Prostate gland (tissue), 2 donors: ENCODE measurements at regions of chr10 and their contacts with region 1.

Region 1: DNA sequence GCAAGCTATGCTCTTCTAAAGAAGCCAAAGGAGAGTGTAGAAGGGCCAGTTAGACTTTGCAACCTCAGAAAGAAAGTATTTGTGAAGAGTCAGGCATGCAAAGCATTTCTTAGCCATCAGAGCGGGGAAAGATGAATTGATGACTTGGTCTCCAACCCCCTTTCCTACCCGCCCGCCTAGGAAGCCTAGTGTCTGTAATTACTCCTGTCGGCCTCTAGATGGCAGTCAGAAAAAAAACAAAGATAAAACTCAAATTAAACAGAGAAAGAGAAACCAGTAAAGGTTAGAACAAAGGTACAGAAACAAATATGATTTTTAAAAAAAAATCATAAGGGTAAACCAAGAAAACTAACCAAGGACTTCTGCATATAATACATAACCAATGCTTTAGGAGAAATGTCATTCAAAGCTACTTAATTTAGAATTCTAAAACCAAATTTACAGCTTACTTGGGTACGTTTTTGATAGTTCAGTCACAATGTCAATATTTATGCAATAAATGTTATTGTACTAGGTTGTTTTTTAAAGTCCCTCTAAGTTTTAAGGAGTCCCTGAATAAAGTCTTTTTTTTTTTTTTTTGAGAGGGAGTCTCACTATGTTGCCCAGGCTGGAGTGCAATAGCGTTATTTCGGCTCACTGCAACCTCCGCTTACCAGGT is 97.6 kb downstream of the LYZL1 start:
- DNase-seq: no peak
- H3K4me3 ChIP-seq: no peak overlapping the region
- H3K27ac ChIP-seq: no peak overlapping the region
- H3K4me1 ChIP-seq: no peaks in the 10 kb centered on the region
- H3K27me3 ChIP-seq: no peaks in the 10 kb centered on the region
- CTCF ChIP-seq: peak; percentile 18 to 69 (median 60)
- POLR2A ChIP-seq: no peak

Region 2: DNA sequence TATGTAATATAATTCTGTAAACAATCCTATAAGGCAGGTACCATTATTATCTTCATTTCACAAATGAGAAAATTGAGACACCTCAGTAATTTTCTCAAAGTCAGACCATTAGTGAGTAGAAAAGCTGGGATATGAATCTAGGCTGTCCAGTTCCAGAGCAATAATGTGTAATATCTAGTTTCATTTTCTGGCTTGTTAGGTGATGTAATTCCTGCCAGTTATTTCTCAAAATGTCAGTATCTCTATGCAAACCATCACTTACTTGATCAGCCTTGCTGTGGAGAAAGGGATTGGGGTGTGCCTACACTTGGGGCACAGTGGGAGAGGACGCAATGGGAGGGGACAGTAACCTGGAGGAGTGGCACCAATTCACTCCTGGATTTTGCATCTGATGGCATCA is 59.9 kb after region 1 on chr10:
- intact Hi-C with region 1: loop called (anchors 5 kb)
- DNase-seq: no peak
- H3K4me3 ChIP-seq: no peak overlapping the region
- H3K27ac ChIP-seq: no peak overlapping the region
- H3K4me1 ChIP-seq: no peaks in the 10 kb centered on the region
- H3K27me3 ChIP-seq: no peaks in the 10 kb centered on the region
- CTCF ChIP-seq: no peak
- POLR2A ChIP-seq: no peak

Region 3: DNA sequence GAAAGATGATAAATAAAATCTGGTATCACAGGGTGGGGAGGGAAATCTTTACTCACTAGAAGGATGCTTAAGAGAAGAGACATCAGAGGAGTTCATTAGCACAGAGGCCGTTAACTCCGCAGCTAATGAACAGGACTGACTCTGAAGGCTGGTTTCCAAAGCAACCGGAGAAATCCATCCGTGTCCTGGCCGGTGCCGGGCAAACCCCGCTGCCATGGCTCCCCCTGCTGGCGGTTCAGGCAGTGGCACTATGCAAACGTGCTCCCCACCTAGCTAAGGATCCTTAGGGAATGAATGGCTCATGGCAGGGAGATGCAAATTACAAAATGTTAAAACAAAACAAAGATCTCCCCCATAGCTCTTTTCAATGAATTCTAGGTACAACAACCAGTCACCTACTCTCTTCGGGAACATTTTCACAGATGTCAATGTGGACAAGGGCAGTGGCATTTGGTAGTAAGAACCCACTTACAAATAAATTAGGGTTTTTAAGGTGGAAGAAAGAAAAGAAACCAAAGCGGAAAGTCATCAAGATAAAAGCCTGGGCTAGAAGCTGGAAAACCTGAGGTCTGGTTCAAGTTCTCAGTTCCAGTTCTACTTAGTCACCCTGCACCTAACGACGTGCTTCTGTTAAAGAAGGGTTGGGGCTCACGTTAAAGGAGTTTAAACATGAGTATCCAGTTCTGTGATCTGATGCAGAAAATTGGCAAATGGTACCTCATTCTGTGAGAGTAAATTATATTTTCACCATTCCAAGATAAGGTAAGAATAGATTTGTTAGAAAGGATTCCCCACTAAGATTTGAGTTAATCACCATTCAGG is 110.1 kb after region 1 on chr10:
- intact Hi-C with region 1: loop called (anchors 5 kb)
- DNase-seq: peak; percentile 46
- H3K4me3 ChIP-seq: no peak overlapping the region
- H3K27ac ChIP-seq: no peak overlapping the region
- H3K4me1 ChIP-seq: no peaks in the 10 kb centered on the region
- H3K27me3 ChIP-seq: no peaks in the 10 kb centered on the region
- CTCF ChIP-seq: peak; percentile 67 to 89 (median 82)
- POLR2A ChIP-seq: no peak

Region 4: GRCh38 chr10:29881336-29881771 is 494.9 kb after region 1 on chr10:
- intact Hi-C with region 1: no loop called
- DNase-seq: no peak
- H3K4me3 ChIP-seq: no peak overlapping the region
- H3K27ac ChIP-seq: no peak overlapping the region
- H3K4me1 ChIP-seq: no peaks in the 10 kb centered on the region
- H3K27me3 ChIP-seq: no peaks in the 10 kb centered on the region
- CTCF ChIP-seq: no peak
- POLR2A ChIP-seq: no peak